ENCODE measurements at regions of chr17 and their contacts with region 1.

Region 1: GRCh38 chr17:1762233-1762900 is 507 bp downstream of the SERPINF1 start:
- DNase-seq: peak; percentile 39
- ATAC-seq: peak; percentile 40
- H3K4me3 ChIP-seq: peak overlapping the region; percentile 51
- H3K27ac ChIP-seq: peak overlapping the region; percentile 61; the same call in 1 of the 2 replicates
- H3K4me1 ChIP-seq: peaks cover 21% of the 10 kb centered on the region
- H3K27me3 ChIP-seq: no peaks in the 10 kb centered on the region
- CTCF ChIP-seq: no peak
- POLR2A ChIP-seq: no peak
- RAD21 ChIP-seq: no peak

Region 2: DNA sequence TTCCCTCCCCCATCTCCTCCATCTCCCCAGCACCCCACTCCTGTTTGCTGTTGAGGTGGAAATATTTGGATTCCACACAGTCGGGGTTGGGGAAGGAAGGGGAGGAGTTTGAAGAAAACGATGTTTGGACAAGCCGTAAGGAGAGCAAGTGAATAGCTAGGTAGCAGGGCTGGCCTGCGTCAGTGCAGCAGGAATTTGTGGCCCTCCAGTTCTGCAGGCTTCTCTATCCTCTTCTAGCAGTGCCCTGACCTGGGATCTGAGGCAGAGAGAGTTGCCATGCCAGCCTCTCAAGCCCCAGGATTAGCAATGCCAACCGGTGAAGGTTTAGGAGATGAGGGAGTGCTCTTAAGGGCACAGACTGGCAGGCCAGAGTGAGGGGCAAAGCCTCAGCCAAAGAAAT is 64.7 kb before region 1 on chr17:
- CTCF ChIA-PET with region 1: no interaction called
- POLR2A ChIA-PET with region 1: interaction called, 12 read pairs
- dilution Hi-C with region 1: no loop called
- in situ Hi-C with region 1: no loop called
- intact Hi-C with region 1: no loop called
- DNase-seq: no peak
- ATAC-seq: peak; percentile 42
- H3K4me3 ChIP-seq: no peak overlapping the region
- H3K27ac ChIP-seq: no peak overlapping the region
- H3K4me1 ChIP-seq: peaks cover 4% of the 10 kb centered on the region; the same call in 1 of the 2 replicates
- H3K27me3 ChIP-seq: no peaks in the 10 kb centered on the region
- CTCF ChIP-seq: no peak
- POLR2A ChIP-seq: no peak
- RAD21 ChIP-seq: no peak